CD8-positive, alpha-beta T cell (primary cell): ENCODE measurements at regions of chr15 and their contacts with region 1.

Region 1: DNA sequence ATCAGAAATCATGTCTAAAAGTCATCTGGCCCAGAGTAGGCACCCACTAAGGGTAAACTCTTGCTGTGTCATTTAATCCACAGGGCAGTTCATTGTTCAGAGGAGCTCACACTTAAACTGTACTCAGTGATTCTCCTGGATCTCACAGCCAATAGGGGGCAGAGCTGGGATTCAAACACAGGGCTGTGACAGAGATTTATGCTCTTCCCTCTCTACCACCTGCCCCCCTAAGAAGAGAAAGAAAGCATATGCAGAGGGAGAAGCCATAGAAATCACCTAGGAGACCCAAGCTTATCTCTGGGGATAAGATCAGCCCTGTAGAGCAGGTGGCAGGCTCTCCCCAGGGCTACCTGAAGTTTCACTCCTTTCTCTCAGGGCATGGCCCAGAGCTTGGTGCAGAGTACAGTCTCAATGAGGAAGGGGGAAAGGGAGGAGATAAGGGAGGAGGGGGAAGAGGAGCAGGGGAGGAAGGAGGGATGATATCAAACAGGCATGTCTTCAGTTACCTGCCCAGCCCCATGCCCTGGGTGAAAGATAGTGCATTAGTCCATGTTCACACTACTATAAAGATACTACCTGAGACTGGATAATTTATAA is 51.8 kb upstream of the ADPGK start:
- DNase-seq: peak in 2 of 9 experiments; percentile 7 to 12
- ATAC-seq: no peak
- H3K4me3 ChIP-seq: no peak overlapping the region
- H3K4me3 Mint-ChIP-seq: no peak overlapping the region
- H3K27ac ChIP-seq: no peak overlapping the region
- H3K27ac Mint-ChIP-seq: no peak overlapping the region
- H3K4me1 ChIP-seq: no peaks in the 10 kb centered on the region
- H3K4me1 Mint-ChIP-seq: no peaks in the 10 kb centered on the region
- H3K27me3 ChIP-seq: no peaks in the 10 kb centered on the region
- H3K27me3 Mint-ChIP-seq: peaks cover 8% of the 10 kb centered on the region
- CTCF ChIP-seq: no peak

Region 2: GRCh38 chr15:72890043-72890442 is 54.7 kb after region 1 on chr15:
- CTCF ChIA-PET with region 1: no interaction called
- POLR2A ChIA-PET with region 1: no interaction called
- intact Hi-C with region 1: loop called in 1 of 2 experiments (anchors 10 kb)
- DNase-seq: no peak
- ATAC-seq: no peak
- H3K4me3 ChIP-seq: no peak overlapping the region
- H3K4me3 Mint-ChIP-seq: no peak overlapping the region
- H3K27ac ChIP-seq: no peak overlapping the region
- H3K27ac Mint-ChIP-seq: no peak overlapping the region
- H3K4me1 ChIP-seq: no peaks in the 10 kb centered on the region
- H3K4me1 Mint-ChIP-seq: no peaks in the 10 kb centered on the region
- H3K27me3 ChIP-seq: no peaks in the 10 kb centered on the region
- H3K27me3 Mint-ChIP-seq: peaks cover 16% of the 10 kb centered on the region
- CTCF ChIP-seq: no peak